ENCODE measurements at regions of chr1 and their contacts with region 1.

Region 1: GRCh38 chr1:8121261-8122170 is 95.4 kb upstream of the ERRFI1 start:
- DNase-seq: peak; percentile 95
- H3K4me3 ChIP-seq: peak overlapping the region in 1 of 4 donors; percentile 15
- H3K27ac ChIP-seq: peak overlapping the region; percentile 88 to 93 (median 91)
- H3K4me1 ChIP-seq: peaks cover 0 to 82% (median 66%) of the 10 kb centered on the region in 4 donors
- H3K27me3 ChIP-seq: no peaks in the 10 kb centered on the region
- CTCF ChIP-seq: no peak
- EP300 ChIP-seq: peak; percentile 75 to 96 (median 94)
- POLR2A ChIP-seq: peak in 1 of 2 donors; percentile 20

Region 2: GRCh38 chr1:8026153-8026975 is 95.2 kb before region 1 on chr1 and contains the start of gene ERRFI1:
- intact Hi-C with region 1: loop called (anchors 2 kb)
- DNase-seq: peak; percentile 98
- H3K4me3 ChIP-seq: peak within 1 kb of the TSS; percentile 63 to 97 (median 84)
- H3K27ac ChIP-seq: peak within 1 kb of the TSS; percentile 96 to 99 (median 97)
- H3K4me1 ChIP-seq: peaks cover 3 to 61% (median 54%) of the 10 kb centered on the region in 4 donors
- H3K27me3 ChIP-seq: no peaks in the 10 kb centered on the region
- CTCF ChIP-seq: no peak
- EP300 ChIP-seq: no peak
- POLR2A ChIP-seq: peak; percentile 71 to 85
- total RNA-seq, gene ERRFI1: 81.1 to 131 (median 101) TPM

Region 3: GRCh38 chr1:8040586-8040985 is 80.9 kb before region 1 on chr1:
- intact Hi-C with region 1: loop called (anchors 5 kb)
- DNase-seq: peak; percentile 92
- H3K4me3 ChIP-seq: no peak overlapping the region
- H3K27ac ChIP-seq: peak overlapping the region; percentile 71 to 81 (median 74)
- H3K4me1 ChIP-seq: peaks cover 0 to 3% (median 0%) of the 10 kb centered on the region in 4 donors
- H3K27me3 ChIP-seq: no peaks in the 10 kb centered on the region
- CTCF ChIP-seq: no peak
- EP300 ChIP-seq: peak in 1 of 4 donors; percentile 9
- POLR2A ChIP-seq: no peak

Region 4: GRCh38 chr1:8077120-8077573 is 44.4 kb before region 1 on chr1:
- intact Hi-C with region 1: no loop called
- DNase-seq: peak; percentile 82
- H3K4me3 ChIP-seq: no peak overlapping the region
- H3K27ac ChIP-seq: peak overlapping the region; percentile 52 to 90 (median 78)
- H3K4me1 ChIP-seq: peaks cover 0 to 45% (median 29%) of the 10 kb centered on the region in 4 donors
- H3K27me3 ChIP-seq: no peaks in the 10 kb centered on the region
- CTCF ChIP-seq: no peak
- EP300 ChIP-seq: no peak
- POLR2A ChIP-seq: no peak

Region 5: GRCh38 chr1:8169364-8170058 is 48.0 kb after region 1 on chr1:
- intact Hi-C with region 1: loop called (anchors 5 kb)
- DNase-seq: peak; percentile 92
- H3K4me3 ChIP-seq: no peak overlapping the region
- H3K27ac ChIP-seq: peak overlapping the region; percentile 80 to 82 (median 81)
- H3K4me1 ChIP-seq: peaks cover 0 to 49% (median 38%) of the 10 kb centered on the region in 4 donors
- H3K27me3 ChIP-seq: no peaks in the 10 kb centered on the region
- CTCF ChIP-seq: no peak
- EP300 ChIP-seq: peak in 3 of 4 donors; percentile 32 to 79 (median 52)
- POLR2A ChIP-seq: no peak

Region 6: GRCh38 chr1:8202182-8202905 is 80.8 kb after region 1 on chr1:
- intact Hi-C with region 1: loop called (anchors 5 kb)
- DNase-seq: peak; percentile 95
- H3K4me3 ChIP-seq: peak overlapping the region in 3 of 4 donors; percentile 11 to 23 (median 12)
- H3K27ac ChIP-seq: peak overlapping the region; percentile 92 to 97 (median 95)
- H3K4me1 ChIP-seq: peaks cover 0 to 72% (median 67%) of the 10 kb centered on the region in 4 donors
- H3K27me3 ChIP-seq: no peaks in the 10 kb centered on the region
- CTCF ChIP-seq: no peak
- EP300 ChIP-seq: peak; percentile 60 to 94 (median 92)
- POLR2A ChIP-seq: no peak